Calu3 (cell line): ENCODE measurements at regions of chr6 and their contacts with region 1.

Region 1: DNA sequence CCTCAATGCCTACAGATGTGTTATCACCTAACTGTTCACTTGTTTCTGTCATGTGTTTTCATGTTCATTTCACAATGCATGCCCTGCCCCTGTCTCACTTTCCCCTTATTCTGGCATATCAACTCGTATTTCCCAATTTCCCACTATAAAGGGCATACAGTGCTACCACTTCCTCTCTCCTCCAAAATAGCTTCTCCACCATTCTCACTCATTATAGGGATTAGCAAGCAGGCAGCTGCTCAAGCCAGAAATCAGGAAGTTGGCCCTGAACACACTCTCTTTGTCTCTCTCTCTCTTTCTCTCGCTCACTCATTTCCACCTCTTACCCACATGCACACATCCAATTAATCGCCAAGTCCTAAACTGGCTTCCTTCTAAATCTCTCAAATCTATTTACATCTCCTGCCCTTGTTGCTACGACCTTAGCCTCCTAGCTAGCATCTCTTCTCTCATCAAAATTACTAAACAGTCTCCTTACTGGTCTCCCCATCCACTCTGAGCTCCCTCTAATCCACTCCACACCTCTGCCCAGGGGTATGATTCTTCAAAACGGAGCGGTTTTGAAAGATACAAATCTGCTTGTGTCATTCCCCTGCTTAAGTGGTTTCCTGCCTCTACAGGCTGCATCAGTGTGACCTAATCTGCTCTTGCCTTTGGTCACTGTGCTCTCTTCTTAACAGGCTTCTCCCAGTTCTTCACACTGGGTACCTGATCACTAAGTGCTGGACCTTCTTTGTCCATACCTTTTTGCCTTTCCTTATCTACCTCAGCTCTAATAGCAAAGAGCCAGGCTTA is 196.2 kb downstream of the BTBD9 start:
- DNase-seq: no peak
- H3K4me3 Mint-ChIP-seq: no peak overlapping the region
- H3K27ac Mint-ChIP-seq: no peak overlapping the region
- H3K4me1 Mint-ChIP-seq: peaks cover 6% of the 10 kb centered on the region
- H3K27me3 Mint-ChIP-seq: no peaks in the 10 kb centered on the region
- CTCF ChIP-seq: no peak

Region 2: GRCh38 chr6:38476141-38476540 is 32.6 kb after region 1 on chr6:
- CTCF ChIA-PET with region 1: no interaction called
- intact Hi-C with region 1: loop called (anchors 1 kb)
- DNase-seq: no peak
- H3K4me3 Mint-ChIP-seq: no peak overlapping the region
- H3K27ac Mint-ChIP-seq: no peak overlapping the region
- H3K4me1 Mint-ChIP-seq: no peaks in the 10 kb centered on the region
- H3K27me3 Mint-ChIP-seq: no peaks in the 10 kb centered on the region
- CTCF ChIP-seq: no peak